CD8-positive, alpha-beta T cell (primary cell): ENCODE measurements at regions of chr1 and their contacts with region 1.

Region 1: DNA sequence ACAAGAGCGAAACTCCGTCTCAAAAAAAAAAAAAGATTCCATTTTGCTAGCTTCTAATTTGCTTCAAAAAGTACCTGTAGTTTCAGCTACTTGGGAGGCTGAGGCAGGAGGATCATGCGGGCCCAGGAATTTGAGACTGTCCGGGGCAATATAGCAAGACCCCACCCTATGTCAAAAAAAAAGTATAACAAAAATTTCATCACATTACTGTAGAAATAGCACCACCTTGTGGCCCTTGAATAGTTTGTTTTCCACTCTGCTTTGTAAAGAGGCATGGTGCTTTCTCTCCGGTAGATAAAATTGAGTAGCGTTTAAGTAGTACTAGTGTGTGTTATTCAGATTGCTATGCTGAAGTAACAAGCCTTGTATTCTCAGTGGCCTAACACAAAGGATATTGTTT is 18.2 kb upstream of the MSTO1 start:
- DNase-seq: peak in 5 of 9 experiments; percentile 11 to 78 (median 31)
- ATAC-seq: peak; percentile 77
- H3K4me3 ChIP-seq: no peak overlapping the region
- H3K4me3 Mint-ChIP-seq: no peak overlapping the region
- H3K27ac ChIP-seq: no peak overlapping the region
- H3K27ac Mint-ChIP-seq: no peak overlapping the region
- H3K4me1 ChIP-seq: no peaks in the 10 kb centered on the region
- H3K4me1 Mint-ChIP-seq: peaks cover 3% of the 10 kb centered on the region
- H3K27me3 ChIP-seq: no peaks in the 10 kb centered on the region
- H3K27me3 Mint-ChIP-seq: no peaks in the 10 kb centered on the region
- CTCF ChIP-seq: peak; percentile 64

Region 2: DNA sequence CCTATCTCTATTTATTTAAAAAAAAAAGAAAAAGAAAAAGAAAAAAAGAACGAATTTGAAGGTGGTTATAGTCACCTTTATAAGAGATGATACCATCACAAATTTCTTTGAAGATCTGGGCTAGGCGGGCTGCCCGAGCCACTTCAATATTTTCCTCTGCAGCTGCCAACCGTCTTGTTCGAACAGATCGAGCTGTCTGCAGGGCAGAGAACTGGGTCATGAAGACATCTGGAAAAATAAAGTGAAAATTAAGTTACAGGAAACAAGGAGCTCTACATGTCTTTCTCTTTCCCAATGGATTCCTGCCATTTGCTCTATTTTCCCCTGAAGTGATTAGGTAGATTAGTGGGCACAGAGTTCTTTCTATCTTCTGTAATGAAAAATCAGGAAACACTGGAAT is 239.1 kb before region 1 on chr1:
- CTCF ChIA-PET with region 1: interaction called, 3 read pairs
- POLR2A ChIA-PET with region 1: no interaction called
- intact Hi-C with region 1: loop called in 1 of 2 experiments (anchors 10 kb)
- DNase-seq: no peak
- ATAC-seq: no peak
- H3K4me3 ChIP-seq: no peak overlapping the region
- H3K4me3 Mint-ChIP-seq: no peak overlapping the region
- H3K27ac ChIP-seq: no peak overlapping the region
- H3K27ac Mint-ChIP-seq: no peak overlapping the region
- H3K4me1 ChIP-seq: no peaks in the 10 kb centered on the region
- H3K4me1 Mint-ChIP-seq: no peaks in the 10 kb centered on the region
- H3K27me3 ChIP-seq: no peaks in the 10 kb centered on the region
- H3K27me3 Mint-ChIP-seq: no peaks in the 10 kb centered on the region
- CTCF ChIP-seq: no peak